ENCODE measurements at regions of chr6 and their contacts with region 1.

Region 1: DNA sequence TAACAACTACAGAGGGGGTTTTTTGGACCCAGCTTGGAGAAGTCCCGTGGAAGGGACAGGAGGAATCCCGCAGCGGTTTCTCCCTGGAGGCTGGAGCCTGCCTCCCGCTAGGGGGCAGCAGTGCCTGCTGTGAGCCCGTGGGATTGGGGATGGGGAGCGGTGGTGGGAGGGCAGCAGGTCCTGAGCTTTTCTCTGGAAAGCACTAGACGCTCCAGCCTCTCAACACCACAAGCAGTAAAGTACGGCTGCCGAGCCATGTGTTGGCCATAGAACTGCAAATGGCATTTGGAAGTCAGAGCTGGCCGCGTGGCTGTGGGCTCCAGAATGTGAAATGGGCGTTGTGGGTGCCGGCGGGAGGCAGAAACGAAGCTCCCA is 47.7 kb downstream of the GMPR start:
- DNase-seq: no peak
- ATAC-seq: peak; percentile 42
- H3K4me3 Mint-ChIP-seq: no peak overlapping the region
- H3K27ac Mint-ChIP-seq: no peak overlapping the region
- H3K4me1 Mint-ChIP-seq: no peaks in the 10 kb centered on the region
- H3K27me3 Mint-ChIP-seq: no peaks in the 10 kb centered on the region

Region 2: GRCh38 chr6:16319813-16320532 is 33.8 kb after region 1 on chr6:
- CTCF ChIA-PET with region 1: interaction called, 11 read pairs
- DNase-seq: peak; percentile 82
- ATAC-seq: peak; percentile 73
- H3K4me3 Mint-ChIP-seq: peak overlapping the region; percentile 66
- H3K27ac Mint-ChIP-seq: peak overlapping the region; percentile 91
- H3K4me1 Mint-ChIP-seq: peaks cover 77% of the 10 kb centered on the region
- H3K27me3 Mint-ChIP-seq: no peaks in the 10 kb centered on the region

Measured in activated CD8-positive, alpha-beta memory T cell treated with anti-CD3 and anti-CD28 coated beads, Interleukin-2, amount 10 ng/mL, durations not matched to agents 7 days and 5 days (primary cell).